Mammary epithelial cell (primary cell): ENCODE measurements at regions of chr1 and their contacts with region 1.

Region 1: GRCh38 chr1:181485287-181486097 is 2.2 kb downstream of the CACNA1E start:
- DNase-seq: no peak
- H3K4me3 ChIP-seq: no peak overlapping the region
- H3K27ac ChIP-seq: no peak overlapping the region
- H3K4me1 ChIP-seq: peaks cover 4% of the 10 kb centered on the region
- H3K27me3 ChIP-seq: peaks cover 31% of the 10 kb centered on the region
- CTCF ChIP-seq: no peak

Region 2: DNA sequence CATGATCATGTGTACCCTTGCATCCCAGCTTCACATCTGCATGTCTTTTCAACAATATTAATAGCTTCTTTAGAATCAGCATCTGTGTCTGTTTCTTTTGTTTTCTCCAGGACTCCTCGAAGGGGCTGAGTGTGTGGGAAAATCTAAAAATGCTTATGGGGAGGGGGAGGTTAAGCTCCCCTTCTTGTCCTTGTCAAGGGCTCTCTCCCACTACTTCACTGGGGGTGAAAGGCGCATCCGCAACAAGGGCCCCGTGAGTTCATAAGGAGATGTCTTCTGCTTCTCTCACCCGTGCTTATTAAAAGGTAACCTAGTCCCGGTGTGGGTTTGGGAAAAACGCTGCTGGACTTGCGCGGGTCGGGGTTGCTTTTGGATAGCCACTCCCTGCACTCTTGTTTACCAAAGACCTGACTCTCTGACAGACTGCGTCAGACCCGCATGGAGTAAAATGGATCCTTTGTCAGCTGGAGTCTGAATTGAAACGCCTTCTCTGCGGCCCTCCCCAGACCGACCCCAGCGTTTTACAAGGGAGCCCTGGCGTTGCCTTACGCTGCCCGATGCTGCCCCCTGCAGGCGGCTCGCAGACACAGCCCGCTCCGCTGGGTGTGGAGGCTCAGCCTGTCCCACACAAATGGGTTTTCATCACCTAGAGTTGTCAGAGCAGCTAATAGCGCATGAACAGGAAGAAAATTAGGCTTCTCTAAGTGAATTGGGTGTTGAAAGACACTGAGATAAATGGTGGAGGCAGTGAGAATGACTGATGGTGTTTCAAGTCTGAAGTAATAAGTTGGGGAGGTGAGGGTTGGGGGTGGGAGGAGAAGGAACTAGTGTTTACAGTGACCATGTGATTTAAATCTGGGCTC is 343.2 kb before region 1 on chr1:
- CTCF ChIA-PET with region 1: no interaction called
- dilution Hi-C with region 1: no loop called
- in situ Hi-C with region 1: no loop called
- intact Hi-C with region 1: no loop called
- DNase-seq: peak; percentile 84
- H3K4me3 ChIP-seq: peak overlapping the region in 1 of 3 experiments; percentile 33
- H3K27ac ChIP-seq: peak overlapping the region; percentile 63
- H3K4me1 ChIP-seq: peaks cover 49% of the 10 kb centered on the region
- H3K27me3 ChIP-seq: no peaks in the 10 kb centered on the region
- CTCF ChIP-seq: peak; percentile 95 to 97

Region 3: GRCh38 chr1:181630838-181631237 is 145.3 kb after region 1 on chr1:
- CTCF ChIA-PET with region 1: interaction called, 13 read pairs
- dilution Hi-C with region 1: no loop called
- in situ Hi-C with region 1: no loop called
- intact Hi-C with region 1: no loop called
- DNase-seq: no peak
- H3K4me3 ChIP-seq: no peak overlapping the region
- H3K27ac ChIP-seq: no peak overlapping the region
- H3K4me1 ChIP-seq: no peaks in the 10 kb centered on the region
- H3K27me3 ChIP-seq: peaks cover 2% of the 10 kb centered on the region
- CTCF ChIP-seq: no peak

Region 4: GRCh38 chr1:181929363-181929762 is 443.9 kb after region 1 on chr1:
- CTCF ChIA-PET with region 1: no interaction called
- dilution Hi-C with region 1: no loop called
- in situ Hi-C with region 1: loop called in 1 of 2 experiments (anchors 5 kb)
- intact Hi-C with region 1: no loop called
- DNase-seq: no peak
- H3K4me3 ChIP-seq: no peak overlapping the region
- H3K27ac ChIP-seq: no peak overlapping the region
- H3K4me1 ChIP-seq: no peaks in the 10 kb centered on the region
- H3K27me3 ChIP-seq: peaks cover 3% of the 10 kb centered on the region
- CTCF ChIP-seq: peak in 1 of 2 donors; percentile 26

Region 5: DNA sequence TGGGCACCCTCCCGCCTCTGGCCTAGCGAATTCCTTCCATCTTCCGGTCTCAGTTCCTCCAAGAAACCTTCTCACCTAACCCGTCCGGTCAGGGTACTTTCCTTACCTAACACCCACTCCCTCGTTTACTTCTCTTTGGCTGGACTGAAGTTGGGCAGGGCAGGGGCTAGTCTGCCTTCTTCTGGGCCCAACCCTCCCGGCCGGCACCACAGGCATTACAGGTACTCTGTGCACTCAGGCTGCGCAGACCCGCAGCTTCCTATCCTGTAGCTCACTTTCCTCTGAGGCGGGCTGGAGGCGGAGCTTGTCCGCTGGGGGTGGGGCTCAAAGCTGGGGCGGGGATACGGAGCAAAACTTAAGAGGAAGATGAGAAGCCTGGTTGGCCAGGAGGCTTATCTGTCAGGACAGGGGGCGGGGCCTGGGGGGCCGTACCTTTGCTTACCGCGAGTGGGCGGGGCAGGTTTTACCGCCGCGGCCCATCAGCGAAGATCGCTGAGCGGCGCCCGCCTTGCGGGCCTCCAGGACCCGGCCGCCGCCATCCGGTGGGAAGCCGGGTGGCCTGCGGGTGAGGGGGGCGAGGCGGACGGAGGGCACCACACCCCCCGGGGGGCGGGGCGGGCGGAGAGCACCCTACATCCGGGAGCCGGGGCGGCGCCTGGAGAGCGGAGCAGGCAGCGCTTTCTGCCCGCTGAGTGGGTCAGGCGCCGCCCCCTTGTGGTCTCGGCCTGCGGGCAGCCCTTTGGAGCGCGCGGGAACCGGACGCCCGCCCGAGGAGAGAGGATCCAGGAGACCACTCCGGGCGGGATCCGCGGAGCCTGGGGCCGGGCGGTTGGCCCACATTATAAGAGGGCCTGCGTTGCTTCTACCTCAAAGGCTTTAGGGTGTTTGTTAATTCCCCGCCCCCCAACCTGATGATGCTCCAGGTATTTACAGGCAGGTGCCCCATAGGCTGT is 544.2 kb after region 1 on chr1:
- CTCF ChIA-PET with region 1: no interaction called
- dilution Hi-C with region 1: loop called (anchors 5 kb)
- in situ Hi-C with region 1: no loop called
- intact Hi-C with region 1: no loop called
- DNase-seq: peak; percentile 97
- H3K4me3 ChIP-seq: peak overlapping the region; percentile 54 to 77 (median 60)
- H3K27ac ChIP-seq: peak overlapping the region; percentile 42
- H3K4me1 ChIP-seq: no peaks in the 10 kb centered on the region
- H3K27me3 ChIP-seq: no peaks in the 10 kb centered on the region
- CTCF ChIP-seq: peak in 1 of 2 donors; percentile 44